Endothelial cell of umbilical vein (primary cell): ENCODE measurements at regions of chr4 and their contacts with region 1.

Region 1: GRCh38 chr4:145732895-145733880 is 53.2 kb downstream of the C4orf51 start:
- DNase-seq: peak; percentile 97
- H3K4me3 ChIP-seq: peak overlapping the region; percentile 38 to 69 (median 51)
- H3K27ac ChIP-seq: peak overlapping the region; percentile 94
- H3K4me1 ChIP-seq: peaks cover 42% of the 10 kb centered on the region
- H3K27me3 ChIP-seq: no peaks in the 10 kb centered on the region
- CTCF ChIP-seq: no peak
- POLR2A ChIP-seq: peak; percentile 73

Region 2: DNA sequence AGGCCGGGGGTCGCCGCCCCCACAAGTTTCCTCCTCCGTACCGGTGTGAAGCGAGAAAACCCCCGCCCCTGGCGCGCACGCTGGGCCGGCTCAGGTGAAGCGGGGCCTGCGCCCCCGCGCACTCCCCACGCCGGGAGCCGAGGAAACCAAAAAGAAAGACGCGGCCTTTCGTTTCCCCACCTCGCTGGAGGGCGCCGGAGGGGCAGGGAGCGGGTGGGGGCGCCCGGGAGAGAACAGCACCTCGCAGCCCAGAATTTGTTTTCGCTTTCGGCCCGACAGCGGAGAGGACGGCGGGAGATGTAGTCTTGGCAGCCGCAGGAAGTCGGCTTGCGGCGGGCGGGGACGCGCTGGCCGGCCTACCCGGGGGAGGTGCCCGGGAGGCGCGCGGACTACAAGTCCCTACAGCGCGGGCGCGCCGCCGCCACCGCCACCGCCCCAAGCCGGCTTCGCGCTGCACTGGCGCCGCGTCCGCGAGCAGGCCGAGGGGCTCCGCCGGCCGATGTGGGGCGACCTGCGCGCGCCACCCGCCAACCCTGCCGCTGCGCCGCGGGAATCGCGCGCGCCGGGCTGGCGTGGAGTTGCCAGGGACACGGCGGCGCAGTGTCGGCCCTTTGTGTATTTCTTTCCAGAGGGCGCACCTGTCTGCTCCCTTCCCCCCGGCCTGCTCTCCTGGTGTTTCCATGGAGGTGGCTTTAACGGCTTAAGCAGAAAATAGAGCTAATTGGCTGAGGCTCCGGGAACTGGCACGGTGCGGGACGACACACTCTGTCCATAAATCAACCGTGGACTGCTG is 552.7 kb before region 1 on chr4 and contains the start of gene OTUD4:
- CTCF ChIA-PET with region 1: no interaction called
- POLR2A ChIA-PET with region 1: no interaction called
- dilution Hi-C with region 1: no loop called
- intact Hi-C with region 1: loop called (anchors 1 kb)
- DNase-seq: peak; percentile 96
- H3K4me3 ChIP-seq: peak within 1 kb of the TSS; percentile 78 to 93 (median 92)
- H3K27ac ChIP-seq: peak within 1 kb of the TSS; percentile 78
- H3K4me1 ChIP-seq: peaks cover 18% of the 10 kb centered on the region
- H3K27me3 ChIP-seq: no peaks in the 10 kb centered on the region
- CTCF ChIP-seq: peak in 1 of 2 donors; percentile 25
- POLR2A ChIP-seq: no peak
- total RNA-seq, gene OTUD4: 39.5 and 40.9 TPM in 2 replicates

Region 3: GRCh38 chr4:145545538-145546174 is 187.5 kb before region 1 on chr4:
- CTCF ChIA-PET with region 1: no interaction called
- POLR2A ChIA-PET with region 1: no interaction called
- dilution Hi-C with region 1: no loop called
- intact Hi-C with region 1: loop called (anchors 1 kb)
- DNase-seq: peak; percentile 100
- H3K4me3 ChIP-seq: peak overlapping the region in 1 of 3 experiments; percentile 58
- H3K27ac ChIP-seq: peak overlapping the region; percentile 98
- H3K4me1 ChIP-seq: peaks cover 43% of the 10 kb centered on the region
- H3K27me3 ChIP-seq: no peaks in the 10 kb centered on the region
- CTCF ChIP-seq: no peak
- POLR2A ChIP-seq: peak; percentile 73

Region 4: DNA sequence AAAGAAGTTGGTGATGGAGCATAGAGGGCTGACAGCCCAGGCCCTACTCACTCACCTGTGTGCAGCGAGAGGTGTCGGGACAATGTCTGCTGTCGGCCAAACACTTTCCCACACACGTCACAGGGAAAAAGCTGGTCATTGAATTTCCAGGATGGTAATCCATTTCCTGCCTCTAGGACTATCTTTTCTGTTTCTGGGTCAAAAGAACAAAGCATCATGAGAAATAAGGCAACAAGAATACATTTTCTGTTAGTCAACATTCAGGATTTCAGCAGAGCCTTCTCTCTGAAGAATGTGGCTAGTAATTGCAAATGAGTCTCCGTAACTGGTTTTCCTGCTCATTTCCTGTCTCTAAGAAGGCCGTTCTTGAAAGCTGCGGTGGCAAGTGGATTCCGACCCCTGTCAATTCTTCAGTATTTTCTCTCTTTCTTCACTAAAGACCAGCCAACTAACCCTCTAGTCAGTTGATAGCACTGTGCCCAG is 46.2 kb after region 1 on chr4:
- CTCF ChIA-PET with region 1: interaction called, 4 read pairs
- POLR2A ChIA-PET with region 1: interaction called, 3 read pairs
- dilution Hi-C with region 1: no loop called
- intact Hi-C with region 1: loop called (anchors 1 kb)
- DNase-seq: peak; percentile 28
- H3K4me3 ChIP-seq: no peak overlapping the region
- H3K27ac ChIP-seq: peak overlapping the region; percentile 54
- H3K4me1 ChIP-seq: peaks cover 36% of the 10 kb centered on the region
- H3K27me3 ChIP-seq: no peaks in the 10 kb centered on the region
- CTCF ChIP-seq: no peak
- POLR2A ChIP-seq: no peak

Region 5: DNA sequence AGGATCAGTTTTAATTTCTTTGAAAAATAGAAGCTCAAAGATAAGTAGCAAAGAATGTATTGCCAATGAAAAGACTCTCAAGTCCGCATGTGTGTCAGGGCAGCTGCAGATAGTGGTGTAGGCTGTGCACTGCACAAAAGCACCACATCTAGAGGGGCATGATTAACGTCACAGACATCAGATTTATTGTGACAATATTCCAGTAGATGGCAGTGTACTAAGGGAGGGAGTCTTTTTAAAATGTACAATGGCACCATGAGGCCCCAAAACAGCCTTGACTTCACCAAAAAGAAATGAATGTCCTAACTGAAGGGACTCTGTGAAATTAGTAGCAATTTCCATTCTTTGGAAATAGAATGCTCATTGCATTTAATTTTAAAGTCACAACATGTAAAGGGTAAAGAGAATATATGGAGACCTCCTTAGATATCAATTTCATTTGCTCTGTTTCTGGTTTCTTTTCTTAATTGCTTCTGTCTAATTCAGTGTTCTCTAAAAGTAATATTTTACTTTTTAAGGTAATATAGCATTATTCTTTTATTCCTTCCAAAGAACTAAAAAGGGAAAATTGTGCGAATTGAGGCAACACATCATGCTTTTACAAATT is 107.1 kb after region 1 on chr4:
- CTCF ChIA-PET with region 1: interaction called, 4 read pairs
- POLR2A ChIA-PET with region 1: interaction called, 6 read pairs
- dilution Hi-C with region 1: no loop called
- intact Hi-C with region 1: loop called (anchors 1 kb)
- DNase-seq: peak; percentile 67
- H3K4me3 ChIP-seq: no peak overlapping the region
- H3K27ac ChIP-seq: no peak overlapping the region
- H3K4me1 ChIP-seq: peaks cover 28% of the 10 kb centered on the region
- H3K27me3 ChIP-seq: no peaks in the 10 kb centered on the region
- CTCF ChIP-seq: peak; percentile 33 to 48
- POLR2A ChIP-seq: no peak

Region 6: DNA sequence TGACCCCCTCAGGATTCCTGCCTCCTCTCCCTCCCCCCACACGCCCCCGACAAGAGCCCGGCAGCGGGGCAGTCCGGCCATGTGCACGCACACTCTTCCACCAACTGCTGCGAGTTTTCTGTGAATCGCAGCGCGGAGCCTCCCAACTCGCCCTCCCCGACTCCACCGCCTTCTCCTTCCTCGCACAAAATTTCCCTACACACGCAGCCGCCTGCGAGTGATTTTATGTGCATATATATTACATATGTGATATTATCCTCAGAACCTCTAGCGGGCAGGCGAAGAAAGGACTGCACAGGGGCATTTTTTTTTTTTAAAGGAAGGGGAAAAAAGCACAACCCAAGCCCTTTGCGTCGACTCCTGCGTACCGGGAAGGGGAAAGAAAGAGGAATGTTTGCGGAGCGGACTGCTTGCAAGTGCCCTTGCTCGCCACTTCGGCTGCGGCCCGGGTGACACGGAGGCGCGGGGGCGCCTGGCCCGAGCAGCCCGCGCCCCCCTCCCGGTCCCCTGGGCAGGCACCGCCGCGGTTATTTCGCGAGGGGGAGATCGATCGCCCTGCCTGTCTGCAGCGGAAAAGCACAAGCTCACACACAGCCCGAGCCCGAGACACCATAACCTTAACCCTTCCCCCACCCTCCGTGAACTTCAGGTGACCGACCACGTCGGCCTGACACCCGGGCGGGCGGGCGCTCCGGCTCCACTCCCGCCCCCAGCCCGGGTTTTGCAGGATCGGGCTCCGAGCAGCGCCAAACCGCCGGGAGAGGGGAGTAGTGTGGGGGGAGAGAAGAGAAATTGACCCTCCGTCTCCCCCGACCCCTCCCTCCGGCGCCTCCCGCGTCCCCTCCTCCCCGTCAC is 203.2 kb after region 1 on chr4:
- CTCF ChIA-PET with region 1: no interaction called
- POLR2A ChIA-PET with region 1: no interaction called
- dilution Hi-C with region 1: no loop called
- intact Hi-C with region 1: loop called (anchors 1 kb)
- DNase-seq: peak; percentile 79
- H3K4me3 ChIP-seq: peak overlapping the region; percentile 62 to 96 (median 81)
- H3K27ac ChIP-seq: peak overlapping the region; percentile 71
- H3K4me1 ChIP-seq: peaks cover 22% of the 10 kb centered on the region
- H3K27me3 ChIP-seq: no peaks in the 10 kb centered on the region
- CTCF ChIP-seq: peak in 1 of 2 donors; percentile 28
- POLR2A ChIP-seq: no peak

Region 7: GRCh38 chr4:146243141-146243882 is 510.1 kb after region 1 on chr4:
- CTCF ChIA-PET with region 1: no interaction called
- POLR2A ChIA-PET with region 1: no interaction called
- dilution Hi-C with region 1: no loop called
- intact Hi-C with region 1: loop called (anchors 1 kb)
- DNase-seq: peak; percentile 37
- H3K4me3 ChIP-seq: no peak overlapping the region
- H3K27ac ChIP-seq: peak overlapping the region; percentile 97
- H3K4me1 ChIP-seq: peaks cover 23% of the 10 kb centered on the region
- H3K27me3 ChIP-seq: no peaks in the 10 kb centered on the region
- CTCF ChIP-seq: peak; percentile 44 to 53
- POLR2A ChIP-seq: no peak